ENCODE measurements at regions of chr17 and their contacts with region 1.

Region 1: DNA sequence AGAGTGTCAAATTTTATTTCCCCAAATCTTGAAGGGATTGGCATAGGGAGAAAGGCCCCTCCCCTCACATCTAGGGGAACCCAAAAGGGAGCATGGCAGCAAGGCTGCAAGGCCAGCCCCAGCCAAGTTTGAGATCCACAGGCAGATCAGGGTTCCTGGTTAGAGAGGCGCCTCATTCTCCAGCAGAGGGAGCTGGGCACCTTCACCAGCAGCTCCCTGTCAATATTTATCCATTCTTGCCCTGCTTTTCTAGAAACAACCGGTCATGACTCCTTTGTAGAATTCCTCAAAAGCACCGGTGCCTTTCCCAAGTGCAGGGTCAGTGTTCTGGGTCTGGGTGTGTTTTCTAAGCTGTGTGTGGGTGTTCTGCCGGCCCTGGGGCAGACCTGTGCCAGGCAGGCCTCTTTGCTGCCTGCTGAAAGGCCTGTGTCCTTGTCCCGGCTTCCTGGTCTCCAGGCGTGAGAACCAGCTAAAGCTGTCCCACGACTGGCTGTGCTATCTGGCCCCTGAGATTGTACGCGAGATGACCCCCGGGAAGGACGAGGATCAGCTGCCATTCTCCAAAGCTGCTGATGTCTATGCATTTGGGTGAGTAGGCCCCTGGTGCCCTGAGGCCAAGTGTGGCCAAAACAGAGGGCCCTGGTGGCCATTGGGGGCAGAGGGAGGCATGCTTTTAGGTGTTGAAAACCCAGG is 21.2 kb upstream of the LGALS9 start:
- DNase-seq: peak; percentile 59 to 72 (median 68)
- ATAC-seq: peak; percentile 67 to 98 (median 92)
- H3K4me3 ChIP-seq: no peak overlapping the region
- H3K27ac ChIP-seq: no peak overlapping the region
- H3K4me1 ChIP-seq: no peaks in the 10 kb centered on the region
- H3K27me3 ChIP-seq: no peaks in the 10 kb centered on the region
- CTCF ChIP-seq: peak; percentile 68 to 84 (median 70)
- POLR2A ChIP-seq: no peak

Region 2: GRCh38 chr17:27438348-27438998 is 171.3 kb before region 1 on chr17:
- intact Hi-C with region 1: no loop called
- DNase-seq: no peak
- ATAC-seq: no peak
- H3K4me3 ChIP-seq: no peak overlapping the region
- H3K27ac ChIP-seq: no peak overlapping the region
- H3K4me1 ChIP-seq: no peaks in the 10 kb centered on the region
- H3K27me3 ChIP-seq: no peaks in the 10 kb centered on the region
- CTCF ChIP-seq: no peak
- POLR2A ChIP-seq: no peak

Region 3: GRCh38 chr17:27666831-27667560 is 57.2 kb after region 1 on chr17:
- intact Hi-C with region 1: no loop called
- DNase-seq: peak in 1 of 3 donors; percentile 39
- ATAC-seq: no peak
- H3K4me3 ChIP-seq: no peak overlapping the region
- H3K27ac ChIP-seq: no peak overlapping the region
- H3K4me1 ChIP-seq: no peaks in the 10 kb centered on the region
- H3K27me3 ChIP-seq: no peaks in the 10 kb centered on the region
- CTCF ChIP-seq: no peak
- POLR2A ChIP-seq: no peak

Region 4: GRCh38 chr17:27751622-27752490 is 142.1 kb after region 1 on chr17:
- intact Hi-C with region 1: loop called in 1 of 2 experiments (anchors 5 kb)
- DNase-seq: no peak
- ATAC-seq: no peak
- H3K4me3 ChIP-seq: no peak overlapping the region
- H3K27ac ChIP-seq: no peak overlapping the region
- H3K4me1 ChIP-seq: no peaks in the 10 kb centered on the region
- H3K27me3 ChIP-seq: no peaks in the 10 kb centered on the region
- CTCF ChIP-seq: no peak
- POLR2A ChIP-seq: no peak

Region 5: GRCh38 chr17:27778193-27778592 is 168.4 kb after region 1 on chr17:
- intact Hi-C with region 1: no loop called
- DNase-seq: no peak
- ATAC-seq: peak in 1 of 4 donors; percentile 21
- H3K4me3 ChIP-seq: no peak overlapping the region
- H3K27ac ChIP-seq: no peak overlapping the region
- H3K4me1 ChIP-seq: no peaks in the 10 kb centered on the region
- H3K27me3 ChIP-seq: no peaks in the 10 kb centered on the region
- CTCF ChIP-seq: no peak
- POLR2A ChIP-seq: no peak

Measured in right lobe of liver (tissue), 6 donors.